ENCODE measurements at regions of chr6 and their contacts with region 1.

Region 1: DNA sequence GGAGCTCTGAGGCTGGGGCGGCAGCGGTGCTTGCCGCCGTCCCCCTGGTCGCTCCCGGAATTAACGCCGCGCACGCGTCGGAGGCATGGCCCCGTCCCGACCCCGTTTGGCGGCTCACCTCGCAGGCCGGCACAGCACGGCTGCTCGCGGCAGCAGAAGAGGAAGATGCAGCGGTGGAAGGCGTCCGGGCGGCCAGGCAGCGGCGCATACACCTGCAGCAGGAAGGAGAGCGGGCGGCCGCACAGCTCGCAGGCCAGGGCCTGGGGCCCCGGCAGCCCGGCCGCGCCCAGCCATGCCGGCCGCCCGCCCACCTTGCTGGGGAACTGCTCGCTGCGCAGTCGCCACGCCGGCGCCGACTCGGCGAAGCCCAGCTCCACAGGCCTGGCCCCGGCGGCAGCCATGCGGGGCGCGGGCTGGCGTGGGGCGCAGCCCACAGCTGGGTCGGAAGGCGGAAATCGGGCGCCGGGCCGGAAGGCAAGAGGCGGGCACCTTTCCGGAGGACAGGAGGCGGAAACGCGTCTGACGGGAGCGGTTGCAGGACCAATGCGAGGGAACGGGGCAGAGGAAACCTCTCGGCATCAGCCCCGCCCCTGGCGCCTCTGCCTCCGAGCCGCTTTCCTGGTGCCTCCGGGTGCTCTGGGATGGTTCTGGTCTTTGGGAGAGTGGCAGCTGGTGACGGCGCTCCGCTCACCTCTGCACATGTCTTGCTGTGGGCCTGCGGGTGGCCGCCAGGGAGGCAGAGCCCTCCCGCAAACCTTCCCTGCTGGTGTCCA is at the start of gene PDCD2:
- DNase-seq: peak; percentile 93 to 96
- ATAC-seq: peak; percentile 97 to 98 (median 98)
- H3K4me3 ChIP-seq: peak within 1 kb of the TSS; percentile 99
- H3K27ac ChIP-seq: peak within 1 kb of the TSS; percentile 95
- H3K4me1 ChIP-seq: peaks cover 8% of the 10 kb centered on the region
- H3K27me3 ChIP-seq: no peaks in the 10 kb centered on the region
- CTCF ChIP-seq: no peak
- total RNA-seq, gene PDCD2: 36.5 to 51.6 (median 49.4) TPM

Region 2: DNA sequence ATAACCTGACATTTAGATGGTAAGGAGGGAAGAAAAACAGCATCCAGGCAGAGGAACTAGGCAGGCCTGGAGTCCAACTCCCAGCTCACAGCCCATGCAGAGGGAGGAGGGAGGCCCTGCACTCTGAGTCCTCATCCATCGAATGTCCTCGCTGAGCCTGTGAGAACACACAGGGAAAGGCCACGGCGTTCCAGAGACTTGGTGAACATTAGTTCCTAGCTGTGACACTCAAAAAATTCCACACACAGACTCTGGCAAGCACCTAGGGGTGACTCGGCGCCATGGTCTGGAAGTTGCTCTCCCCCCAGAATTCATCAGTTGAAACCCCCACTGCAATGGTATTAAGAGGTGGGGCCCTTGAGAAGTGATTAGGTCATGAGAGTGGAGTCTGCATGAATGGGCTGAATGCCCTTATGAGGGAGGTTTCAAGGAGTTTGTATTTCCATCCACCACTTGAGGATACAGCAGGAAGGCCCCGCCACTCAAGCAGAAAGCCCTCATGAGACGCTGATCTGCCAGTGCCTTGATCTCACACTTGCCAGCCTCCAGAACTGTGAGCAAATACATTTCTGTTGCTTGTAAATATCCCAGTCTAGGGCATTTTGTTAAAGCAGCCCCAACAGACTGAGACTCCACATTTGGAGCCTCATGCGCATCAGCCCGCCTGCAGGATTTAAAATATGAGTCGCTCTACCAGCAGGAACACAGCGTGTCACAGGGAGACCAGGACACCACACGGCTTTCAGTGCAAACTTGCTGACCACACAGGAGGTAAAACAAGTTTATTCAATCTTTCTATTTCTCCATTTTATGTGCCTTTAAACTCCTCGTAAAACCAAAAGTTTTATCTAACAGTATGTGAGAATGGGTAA is 956.4 kb before region 1 on chr6:
- intact Hi-C with region 1: no loop called
- DNase-seq: no peak
- ATAC-seq: no peak
- H3K4me3 ChIP-seq: no peak overlapping the region
- H3K27ac ChIP-seq: no peak overlapping the region
- H3K4me1 ChIP-seq: no peaks in the 10 kb centered on the region
- H3K27me3 ChIP-seq: no peaks in the 10 kb centered on the region
- CTCF ChIP-seq: no peak

Region 3: DNA sequence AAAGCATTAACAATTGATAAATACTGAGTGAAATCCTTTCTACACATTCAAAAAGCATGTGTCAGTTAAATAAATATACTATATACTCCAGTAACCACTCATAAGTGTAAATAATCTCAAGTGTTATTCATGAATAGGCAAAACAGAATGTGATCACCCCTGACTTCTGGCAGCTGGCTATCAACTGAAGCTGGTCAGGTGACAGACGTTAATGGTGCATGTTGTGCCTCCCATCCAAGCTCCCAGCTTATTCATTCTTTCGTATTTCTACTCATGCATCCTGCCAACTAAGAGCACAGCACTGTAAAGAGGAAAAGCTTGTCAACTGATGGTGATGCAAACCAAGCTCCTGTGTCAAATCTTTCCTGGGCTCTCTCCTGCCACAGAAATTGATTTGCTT is 39.0 kb before region 1 on chr6:
- intact Hi-C with region 1: loop called in 1 of 2 experiments (anchors 5 kb)
- DNase-seq: no peak
- ATAC-seq: peak; percentile 55 to 89 (median 67)
- H3K4me3 ChIP-seq: no peak overlapping the region
- H3K27ac ChIP-seq: peak overlapping the region; percentile 34
- H3K4me1 ChIP-seq: peaks cover 46% of the 10 kb centered on the region
- H3K27me3 ChIP-seq: no peaks in the 10 kb centered on the region
- CTCF ChIP-seq: no peak